ENCODE measurements at regions of chr5 and their contacts with region 1.

Region 1: GRCh38 chr5:88140856-88141752 is 127.5 kb downstream of the TMEM161B start:
- DNase-seq: peak; percentile 97
- H3K4me3 Mint-ChIP-seq: no peak overlapping the region
- H3K27ac Mint-ChIP-seq: no peak overlapping the region
- H3K4me1 Mint-ChIP-seq: peaks cover 20% of the 10 kb centered on the region
- H3K27me3 Mint-ChIP-seq: peaks cover 38% of the 10 kb centered on the region

Region 2: GRCh38 chr5:88203981-88204750 is 63.1 kb after region 1 on chr5:
- intact Hi-C with region 1: loop called (anchors 5 kb)
- DNase-seq: peak; percentile 75
- H3K4me3 Mint-ChIP-seq: peak overlapping the region; percentile 50
- H3K27ac Mint-ChIP-seq: peak overlapping the region; percentile 82
- H3K4me1 Mint-ChIP-seq: peaks cover 8% of the 10 kb centered on the region
- H3K27me3 Mint-ChIP-seq: no peaks in the 10 kb centered on the region

Region 3: GRCh38 chr5:88236866-88237642 is 96.0 kb after region 1 on chr5:
- intact Hi-C with region 1: no loop called
- DNase-seq: no peak
- H3K4me3 Mint-ChIP-seq: no peak overlapping the region
- H3K27ac Mint-ChIP-seq: no peak overlapping the region
- H3K4me1 Mint-ChIP-seq: peaks cover 12% of the 10 kb centered on the region
- H3K27me3 Mint-ChIP-seq: no peaks in the 10 kb centered on the region

Region 4: DNA sequence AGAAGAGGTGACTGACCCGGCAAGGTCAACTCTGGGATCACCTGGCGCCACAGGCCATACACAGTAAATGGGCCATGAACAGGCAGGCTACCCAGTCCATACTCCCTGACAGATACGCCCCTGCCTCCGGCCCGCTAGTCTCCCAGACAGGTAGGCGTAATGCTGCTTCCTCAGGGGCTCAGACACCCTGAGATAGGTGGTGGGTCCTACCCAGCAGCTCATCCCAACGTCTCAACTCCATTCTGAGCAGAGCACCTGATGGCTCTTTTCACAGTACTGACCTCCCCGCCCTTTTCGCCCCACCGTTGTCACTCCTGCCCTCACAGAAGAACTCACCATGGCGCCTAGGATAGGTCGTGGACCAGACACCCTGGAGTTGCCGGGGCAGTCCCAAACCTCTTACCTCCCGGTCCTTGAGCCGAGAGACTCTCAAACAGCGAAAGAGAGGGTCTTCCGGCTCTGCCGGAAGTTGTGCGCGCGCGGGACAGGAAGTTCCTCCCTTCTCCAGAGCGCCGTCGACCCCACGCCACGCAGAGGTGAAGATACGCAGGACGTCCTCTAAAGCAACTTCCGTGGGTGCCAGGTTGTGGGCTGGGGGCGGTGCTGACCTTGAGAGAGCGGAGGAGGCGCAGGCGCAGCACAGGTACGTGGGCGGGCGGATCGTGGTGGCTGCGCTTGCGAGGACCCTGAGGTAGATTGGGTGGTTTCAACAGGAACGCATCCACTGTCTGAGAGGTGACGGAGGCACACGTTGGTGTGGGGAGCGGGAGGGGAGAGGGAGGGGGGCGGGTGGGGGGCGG is 127.5 kb after region 1 on chr5 and contains the start of gene TMEM161B:
- intact Hi-C with region 1: loop called (anchors 1 kb)
- DNase-seq: peak; percentile 98
- H3K4me3 Mint-ChIP-seq: peak within 1 kb of the TSS; percentile 98
- H3K27ac Mint-ChIP-seq: peak within 1 kb of the TSS; percentile 98
- H3K4me1 Mint-ChIP-seq: peaks cover 43% of the 10 kb centered on the region
- H3K27me3 Mint-ChIP-seq: peaks cover 3% of the 10 kb centered on the region
- total RNA-seq, gene TMEM161B: 27.2 and 30.1 TPM in 2 replicates

Region 5: DNA sequence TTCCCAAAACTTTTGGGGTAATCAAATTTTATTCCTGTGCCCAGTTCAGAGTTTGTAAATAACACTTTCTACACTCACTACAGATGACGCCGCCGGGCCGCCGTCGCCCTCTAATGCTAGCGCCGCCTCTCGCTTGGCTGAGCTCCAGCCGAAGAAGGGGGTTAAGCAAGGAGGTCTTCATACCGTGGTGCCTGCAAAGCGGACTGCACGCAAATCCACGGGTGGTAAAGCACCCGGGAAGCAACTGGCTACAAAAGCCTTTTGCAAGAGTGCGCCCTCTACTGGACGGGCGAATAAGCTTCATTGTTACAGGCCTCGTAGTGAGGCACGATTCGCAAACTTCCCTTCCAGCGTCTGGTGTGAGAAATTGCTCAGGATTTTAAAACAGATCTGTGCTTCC is 461.5 kb after region 1 on chr5:
- intact Hi-C with region 1: loop called (anchors 2 kb)
- DNase-seq: peak; percentile 79
- H3K4me3 Mint-ChIP-seq: no peak overlapping the region
- H3K27ac Mint-ChIP-seq: no peak overlapping the region
- H3K4me1 Mint-ChIP-seq: no peaks in the 10 kb centered on the region
- H3K27me3 Mint-ChIP-seq: no peaks in the 10 kb centered on the region

Region 6: DNA sequence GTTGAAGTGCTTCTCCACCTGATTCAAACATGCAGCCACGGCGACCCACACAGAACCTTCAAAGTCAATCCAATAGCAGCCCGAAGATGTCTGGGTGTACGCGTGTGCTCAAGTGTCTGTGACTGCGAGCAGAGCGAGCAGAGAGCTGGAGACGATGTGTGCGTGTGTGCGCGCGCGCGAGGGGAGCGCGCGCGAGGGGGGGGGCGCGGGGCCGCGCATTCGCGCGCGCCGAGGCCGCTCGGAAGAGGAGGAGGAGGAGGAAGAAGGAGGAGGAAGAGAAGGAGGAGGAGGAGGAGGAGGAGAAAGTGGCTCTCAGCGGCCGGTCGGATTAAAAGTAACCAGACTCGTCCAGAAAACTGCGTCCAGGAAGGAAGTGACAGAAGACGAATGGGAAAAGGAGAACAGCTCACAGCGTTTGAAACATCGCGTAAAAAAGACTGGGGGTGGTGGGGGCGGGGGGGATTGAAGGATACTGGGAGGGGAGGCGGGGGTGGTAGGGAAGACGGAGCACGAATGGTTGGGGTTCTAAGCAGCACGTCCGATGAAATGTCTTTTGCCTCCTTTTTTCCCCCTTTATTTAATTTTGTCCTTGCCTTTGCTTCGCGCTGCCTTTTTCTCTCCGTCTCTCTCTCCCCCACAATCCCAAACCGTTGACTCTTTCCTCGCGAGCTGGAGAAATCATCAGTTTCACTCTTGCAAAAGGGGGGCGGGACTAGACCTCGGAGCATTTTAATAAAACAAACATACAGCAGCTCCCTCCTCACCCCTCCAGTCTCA is 742.1 kb after region 1 on chr5 and contains the start of gene MEF2C:
- intact Hi-C with region 1: loop called (anchors 5 kb)
- DNase-seq: peak; percentile 59
- H3K4me3 Mint-ChIP-seq: peak within 1 kb of the TSS; percentile 82
- H3K27ac Mint-ChIP-seq: peak within 1 kb of the TSS; percentile 8
- H3K4me1 Mint-ChIP-seq: peaks cover 20% of the 10 kb centered on the region
- H3K27me3 Mint-ChIP-seq: peaks cover 64% of the 10 kb centered on the region
- total RNA-seq, gene MEF2C: 0.33 and 0.71 TPM in 2 replicates

Measured in activated CD4-positive, alpha-beta T cell treated with anti-CD3 and anti-CD28 coated beads, Interleukin-2, amount 10 ng/mL, durations not matched to agents 24 days and 14 days (primary cell).